IMR-90 (cell line): ENCODE measurements at regions of chr13 and their contacts with region 1.

Region 1: GRCh38 chr13:69755101-69755500 is 352.5 kb upstream of the ATXN8OS start:
- DNase-seq: no peak
- ATAC-seq: no peak
- H3K4me3 ChIP-seq: no peak overlapping the region
- H3K27ac ChIP-seq: no peak overlapping the region
- H3K4me1 ChIP-seq: no peaks in the 10 kb centered on the region
- H3K27me3 ChIP-seq: no peaks in the 10 kb centered on the region
- CTCF ChIP-seq: no peak
- POLR2A ChIP-seq: no peak
- RAD21 ChIP-seq: no peak

Region 2: DNA sequence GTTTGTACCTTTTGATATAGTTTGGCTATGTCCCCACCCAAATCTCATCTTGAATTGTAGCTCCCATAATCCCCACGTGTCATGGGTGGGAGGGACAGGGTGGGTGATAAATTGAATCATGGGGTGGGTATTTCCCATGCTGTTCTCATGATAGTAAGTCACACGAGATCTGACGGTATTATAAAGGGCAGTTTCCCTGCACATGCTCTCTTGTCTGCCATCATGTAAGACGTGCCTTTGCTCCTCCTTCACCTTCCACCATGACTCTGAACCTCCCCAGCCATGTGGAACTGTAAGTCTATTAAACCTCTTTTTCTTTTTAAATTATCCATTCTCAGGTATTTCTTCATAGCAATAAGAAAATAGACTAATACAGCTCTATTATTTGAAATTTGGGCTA is 21.8 kb after region 1 on chr13:
- CTCF ChIA-PET with region 1: no interaction called
- POLR2A ChIA-PET with region 1: interaction called, 15 read pairs
- dilution Hi-C with region 1: no loop called
- in situ Hi-C with region 1: no loop called
- intact Hi-C with region 1: no loop called
- DNase-seq: no peak
- ATAC-seq: no peak
- H3K4me3 ChIP-seq: no peak overlapping the region
- H3K27ac ChIP-seq: no peak overlapping the region
- H3K4me1 ChIP-seq: no peaks in the 10 kb centered on the region
- H3K27me3 ChIP-seq: no peaks in the 10 kb centered on the region
- CTCF ChIP-seq: no peak
- POLR2A ChIP-seq: no peak
- RAD21 ChIP-seq: no peak

Region 3: DNA sequence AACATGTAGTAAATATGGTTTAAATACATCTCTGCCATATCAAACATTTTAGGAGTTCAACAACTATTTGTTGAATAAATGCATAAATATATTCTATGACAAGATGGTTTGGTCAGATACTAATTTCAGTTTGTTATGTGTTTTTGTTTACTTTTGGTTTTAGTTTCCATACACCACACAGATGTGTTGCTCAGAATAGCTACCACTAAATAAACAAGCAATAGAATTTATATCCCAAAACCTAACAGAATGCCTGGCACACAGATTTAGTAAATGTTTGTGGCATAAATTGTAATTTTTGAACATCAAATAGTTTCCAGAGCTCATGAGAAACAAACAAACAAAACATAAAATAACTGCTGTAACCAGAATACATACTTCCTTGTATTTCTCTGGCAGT is 225.7 kb after region 1 on chr13:
- CTCF ChIA-PET with region 1: no interaction called
- POLR2A ChIA-PET with region 1: no interaction called
- dilution Hi-C with region 1: no loop called
- in situ Hi-C with region 1: no loop called
- intact Hi-C with region 1: no loop called
- DNase-seq: no peak
- ATAC-seq: no peak
- H3K4me3 ChIP-seq: no peak overlapping the region
- H3K27ac ChIP-seq: no peak overlapping the region
- H3K4me1 ChIP-seq: no peaks in the 10 kb centered on the region
- H3K27me3 ChIP-seq: no peaks in the 10 kb centered on the region
- CTCF ChIP-seq: no peak
- POLR2A ChIP-seq: no peak
- RAD21 ChIP-seq: no peak

Region 4: DNA sequence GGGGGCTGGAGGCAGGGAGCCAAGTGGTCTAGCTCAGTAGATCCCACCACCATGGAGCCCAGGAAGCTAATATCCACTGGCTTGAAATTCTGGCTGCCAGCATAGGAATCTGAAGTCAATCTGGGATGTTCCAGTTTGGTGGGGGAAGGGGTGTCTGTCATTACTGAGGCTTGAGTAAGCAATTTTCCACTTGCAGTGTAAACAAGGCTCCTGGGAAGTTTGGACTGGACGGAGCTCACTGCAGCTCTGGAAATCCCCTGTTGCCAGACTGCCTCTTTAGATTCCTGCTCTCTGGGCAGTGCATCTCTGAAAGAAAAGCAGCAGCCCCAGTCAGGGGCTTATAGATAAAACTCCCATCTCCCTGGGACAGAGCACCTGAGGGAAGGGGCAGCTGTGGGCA is 702.4 kb after region 1 on chr13:
- CTCF ChIA-PET with region 1: no interaction called
- POLR2A ChIA-PET with region 1: no interaction called
- dilution Hi-C with region 1: no loop called
- in situ Hi-C with region 1: no loop called
- intact Hi-C with region 1: no loop called
- DNase-seq: no peak
- ATAC-seq: no peak
- H3K4me3 ChIP-seq: no peak overlapping the region
- H3K27ac ChIP-seq: no peak overlapping the region
- H3K4me1 ChIP-seq: no peaks in the 10 kb centered on the region
- H3K27me3 ChIP-seq: no peaks in the 10 kb centered on the region
- CTCF ChIP-seq: no peak
- POLR2A ChIP-seq: no peak
- RAD21 ChIP-seq: no peak